ENCODE measurements at regions of chr6 and their contacts with region 1.

Region 1: DNA sequence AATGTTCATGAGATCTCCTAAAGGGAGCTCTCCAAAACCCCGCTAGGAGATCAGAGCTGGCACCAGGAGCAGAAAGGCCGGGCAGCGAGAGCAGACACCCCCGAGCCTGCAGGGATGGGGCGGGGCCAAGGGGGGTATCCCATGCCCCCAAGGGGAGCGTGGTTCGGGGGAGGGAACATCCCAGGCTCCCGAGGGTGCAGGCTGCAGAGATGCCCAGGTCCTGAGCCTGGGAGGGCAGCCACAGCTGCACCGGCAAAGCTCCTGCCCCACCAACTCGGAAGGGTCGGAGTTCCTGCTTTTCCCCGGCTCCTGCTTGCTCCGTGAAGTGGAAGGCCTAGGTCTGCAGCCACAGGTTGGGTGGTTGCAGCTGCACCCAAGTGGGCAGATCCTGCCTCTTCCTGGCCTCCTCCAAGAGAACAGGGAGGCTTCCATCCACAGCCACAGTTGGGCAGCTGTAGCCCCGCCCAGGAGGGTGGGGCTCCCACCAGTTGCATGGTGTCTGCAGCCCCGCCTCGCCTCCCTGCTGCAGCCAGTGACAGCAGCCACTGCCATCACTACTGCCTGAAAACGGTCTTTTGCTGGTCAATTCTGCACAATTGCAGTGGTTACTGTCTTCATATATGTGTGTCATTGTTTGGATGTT is 13.4 kb upstream of the GMNN start:
- DNase-seq: no peak
- H3K4me3 ChIP-seq: no peak overlapping the region
- H3K27ac ChIP-seq: no peak overlapping the region
- H3K4me1 ChIP-seq: no peaks in the 10 kb centered on the region
- H3K27me3 ChIP-seq: no peaks in the 10 kb centered on the region
- CTCF ChIP-seq: no peak
- POLR2A ChIP-seq: no peak

Region 2: GRCh38 chr6:24658573-24659511 is 102.5 kb before region 1 on chr6:
- intact Hi-C with region 1: loop called (anchors 5 kb)
- DNase-seq: no peak
- H3K4me3 ChIP-seq: no peak overlapping the region
- H3K27ac ChIP-seq: no peak overlapping the region
- H3K4me1 ChIP-seq: no peaks in the 10 kb centered on the region
- H3K27me3 ChIP-seq: no peaks in the 10 kb centered on the region
- CTCF ChIP-seq: no peak
- POLR2A ChIP-seq: no peak

Measured in breast epithelium (tissue), 4 donors.